Activated CD8-positive, alpha-beta T cell treated with anti-CD3 and anti-CD28 coated beads for 36 hours (primary cell): ENCODE measurements at regions of chr18 and their contacts with region 1.

Region 1: DNA sequence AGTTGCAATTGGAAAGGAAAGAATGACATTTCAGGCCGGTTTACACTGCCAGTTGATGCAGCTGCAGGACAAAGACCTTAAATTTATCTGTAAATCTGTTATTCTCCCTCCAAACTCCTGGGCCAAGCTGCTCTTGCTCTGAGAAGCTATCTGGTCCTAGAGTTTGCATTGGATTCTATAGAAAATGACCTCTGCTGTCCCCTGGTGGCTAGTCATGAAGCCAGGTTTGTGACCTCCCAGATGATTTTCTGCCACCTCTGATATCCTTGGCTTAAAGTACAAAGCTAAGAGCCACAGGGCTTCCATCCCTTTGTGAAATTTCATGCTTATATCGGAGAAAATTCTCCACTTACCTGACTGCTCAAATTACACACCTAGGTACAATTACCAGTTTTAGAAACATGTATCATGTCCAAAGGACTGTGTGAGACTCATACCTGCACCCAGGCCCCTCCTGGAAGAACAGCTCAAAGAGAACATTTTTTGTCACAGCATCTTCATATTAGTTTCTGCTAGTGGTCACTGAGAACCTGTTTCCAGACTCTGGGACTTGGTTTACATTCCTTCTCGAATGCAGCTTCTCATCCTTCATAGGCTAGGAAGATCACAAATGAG is 28.9 kb upstream of the IER3IP1 start:
- DNase-seq: peak; percentile 58
- ATAC-seq: peak; percentile 65
- H3K4me3 Mint-ChIP-seq: no peak overlapping the region
- H3K27ac Mint-ChIP-seq: no peak overlapping the region
- H3K4me1 Mint-ChIP-seq: no peaks in the 10 kb centered on the region
- H3K27me3 Mint-ChIP-seq: peaks cover 23% of the 10 kb centered on the region
- CTCF ChIP-seq: peak; percentile 61

Region 2: DNA sequence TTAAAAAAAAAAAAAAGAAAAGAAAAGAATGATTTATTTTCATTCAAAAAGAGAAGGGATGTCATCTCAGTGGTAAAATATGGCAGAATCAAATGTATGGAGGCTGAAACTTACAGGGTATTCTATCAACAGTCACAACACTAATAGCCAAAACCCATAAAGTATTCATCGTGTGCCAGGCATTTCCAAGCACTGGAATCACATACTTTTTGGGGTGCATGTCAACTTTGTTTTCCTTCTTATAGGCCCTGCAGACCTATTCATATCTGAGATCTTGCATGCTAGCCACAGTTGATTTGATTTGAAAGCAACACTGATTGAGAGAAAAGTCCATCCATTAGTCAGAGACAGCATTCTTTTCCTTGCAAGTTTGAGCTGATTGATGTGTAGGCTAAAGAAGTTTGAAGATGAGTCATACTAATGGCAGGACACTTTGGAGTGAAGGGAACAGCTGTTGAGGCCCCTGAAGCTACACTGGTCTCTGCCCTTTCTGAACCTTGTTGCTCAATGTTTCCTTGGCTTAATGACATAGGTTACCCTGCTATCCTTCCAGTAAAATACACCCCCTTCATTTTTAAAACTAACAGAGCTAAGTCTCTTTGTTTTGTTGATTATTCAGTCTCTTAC is 265.6 kb before region 1 on chr18:
- CTCF ChIA-PET with region 1: no interaction called
- POLR2A ChIA-PET with region 1: no interaction called
- intact Hi-C with region 1: no loop called
- DNase-seq: no peak
- ATAC-seq: no peak
- H3K4me3 Mint-ChIP-seq: no peak overlapping the region
- H3K27ac Mint-ChIP-seq: no peak overlapping the region
- H3K4me1 Mint-ChIP-seq: no peaks in the 10 kb centered on the region
- H3K27me3 Mint-ChIP-seq: peaks cover 3% of the 10 kb centered on the region
- CTCF ChIP-seq: no peak

Region 3: DNA sequence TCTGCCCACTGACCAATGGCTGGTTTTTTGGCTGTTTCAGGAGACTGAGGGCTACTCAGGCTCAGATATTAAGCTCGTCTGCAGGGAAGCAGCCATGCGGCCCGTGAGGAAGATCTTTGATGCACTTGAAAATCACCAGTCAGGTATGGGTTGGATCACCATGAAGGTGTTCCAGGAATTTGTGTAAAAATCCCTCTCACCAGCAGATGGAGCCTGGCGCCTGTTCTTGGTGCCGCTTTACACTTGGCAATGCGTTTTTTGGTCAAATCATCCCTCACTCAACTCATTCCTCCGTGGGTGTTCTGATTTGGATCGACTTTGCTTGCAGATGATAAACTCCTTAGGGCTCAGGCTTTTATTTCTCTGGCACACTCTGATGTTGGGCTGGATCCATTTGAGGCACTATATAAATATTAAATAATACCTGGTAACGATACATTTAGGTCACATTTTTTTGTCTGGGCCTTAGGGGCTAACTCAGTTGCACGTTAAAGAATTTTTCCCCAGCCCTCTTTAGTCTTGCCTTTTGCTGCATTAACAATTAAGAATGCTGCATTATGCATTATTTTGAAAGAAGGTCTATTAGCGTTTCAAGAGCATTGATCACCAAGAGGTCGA is 104.7 kb before region 1 on chr18:
- CTCF ChIA-PET with region 1: interaction called, 65 read pairs
- POLR2A ChIA-PET with region 1: no interaction called
- intact Hi-C with region 1: loop called (anchors 1 kb)
- DNase-seq: peak; percentile 70
- ATAC-seq: peak; percentile 72
- H3K4me3 Mint-ChIP-seq: no peak overlapping the region
- H3K27ac Mint-ChIP-seq: no peak overlapping the region
- H3K4me1 Mint-ChIP-seq: no peaks in the 10 kb centered on the region
- H3K27me3 Mint-ChIP-seq: no peaks in the 10 kb centered on the region
- CTCF ChIP-seq: peak; percentile 72

Region 4: GRCh38 chr18:47113796-47114540 is 91.0 kb before region 1 on chr18:
- CTCF ChIA-PET with region 1: interaction called, 26 read pairs
- POLR2A ChIA-PET with region 1: no interaction called
- intact Hi-C with region 1: no loop called
- DNase-seq: no peak
- ATAC-seq: no peak
- H3K4me3 Mint-ChIP-seq: no peak overlapping the region
- H3K27ac Mint-ChIP-seq: no peak overlapping the region
- H3K4me1 Mint-ChIP-seq: no peaks in the 10 kb centered on the region
- H3K27me3 Mint-ChIP-seq: no peaks in the 10 kb centered on the region
- CTCF ChIP-seq: no peak

Region 5: DNA sequence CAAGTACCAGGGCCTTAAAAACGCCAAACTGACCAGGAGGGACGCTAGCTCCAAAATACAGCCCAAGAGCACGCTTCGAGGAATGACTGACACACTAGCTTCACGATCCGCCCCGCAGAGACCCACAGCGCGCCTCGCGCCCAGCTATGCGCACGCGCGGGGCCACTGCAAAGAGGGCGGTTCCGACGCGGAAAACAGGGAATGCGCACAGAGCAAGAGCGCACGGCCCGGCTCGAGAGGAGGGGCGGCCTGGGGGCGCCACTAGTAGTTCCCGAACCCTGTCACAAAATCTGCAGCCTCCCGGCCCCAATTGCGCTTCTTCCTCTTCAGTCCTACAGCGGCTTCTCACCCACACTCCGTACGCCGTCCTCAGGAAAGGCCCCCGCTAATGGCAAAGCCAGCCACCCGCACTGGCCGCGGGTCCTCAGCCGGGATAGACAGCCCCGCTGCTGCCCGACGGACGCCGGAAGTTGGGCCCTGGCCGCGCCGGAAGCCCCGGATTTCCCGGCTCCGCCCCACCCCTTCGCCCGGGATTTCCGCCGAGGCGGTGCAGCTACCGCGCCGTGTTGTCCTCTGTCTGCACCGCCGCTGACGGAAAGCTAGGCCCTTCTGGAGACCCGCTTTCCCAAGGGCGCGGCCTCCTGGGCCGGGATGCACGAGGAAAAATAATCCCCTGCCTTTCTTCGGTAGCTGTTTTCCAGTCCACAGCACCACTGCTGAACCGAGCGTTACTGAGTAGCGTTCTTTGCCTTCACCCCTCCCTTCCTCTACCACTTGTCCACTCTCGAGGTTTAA is 54.8 kb before region 1 on chr18 and contains the start of gene HDHD2:
- CTCF ChIA-PET with region 1: interaction called, 10 read pairs
- POLR2A ChIA-PET with region 1: no interaction called
- intact Hi-C with region 1: no loop called
- DNase-seq: peak; percentile 80
- ATAC-seq: peak; percentile 90
- H3K4me3 Mint-ChIP-seq: peak within 1 kb of the TSS; percentile 89
- H3K27ac Mint-ChIP-seq: peak within 1 kb of the TSS; percentile 93
- H3K4me1 Mint-ChIP-seq: peaks cover 37% of the 10 kb centered on the region
- H3K27me3 Mint-ChIP-seq: no peaks in the 10 kb centered on the region
- CTCF ChIP-seq: no peak
- total RNA-seq, gene HDHD2: 28.1 to 32.2 TPM

Region 6: GRCh38 chr18:47191961-47192360 is 13.1 kb before region 1 on chr18:
- CTCF ChIA-PET with region 1: interaction called, 10 read pairs
- POLR2A ChIA-PET with region 1: interaction called, 3 read pairs
- intact Hi-C with region 1: no loop called
- DNase-seq: peak; percentile 5
- ATAC-seq: no peak
- H3K4me3 Mint-ChIP-seq: no peak overlapping the region
- H3K27ac Mint-ChIP-seq: no peak overlapping the region
- H3K4me1 Mint-ChIP-seq: no peaks in the 10 kb centered on the region
- H3K27me3 Mint-ChIP-seq: peaks cover 29% of the 10 kb centered on the region
- CTCF ChIP-seq: no peak

Region 7: GRCh38 chr18:47215554-47216138 is 10.6 kb after region 1 on chr18:
- CTCF ChIA-PET with region 1: interaction called, 37 read pairs
- POLR2A ChIA-PET with region 1: no interaction called
- intact Hi-C with region 1: no loop called
- DNase-seq: peak; percentile 36
- ATAC-seq: peak; percentile 74
- H3K4me3 Mint-ChIP-seq: no peak overlapping the region
- H3K27ac Mint-ChIP-seq: no peak overlapping the region
- H3K4me1 Mint-ChIP-seq: no peaks in the 10 kb centered on the region
- H3K27me3 Mint-ChIP-seq: peaks cover 30% of the 10 kb centered on the region
- CTCF ChIP-seq: peak; percentile 40